Naive thymus-derived CD4-positive, alpha-beta T cell (primary cell): ENCODE measurements at regions of chr1 and their contacts with region 1.

Region 1: GRCh38 chr1:169928438-169929209 is 34.9 kb upstream of the SCYL3 start:
- DNase-seq: peak in 7 of 9 donors; percentile 12 to 61 (median 44)
- ATAC-seq: peak; percentile 78
- H3K4me3 ChIP-seq: no peak overlapping the region
- H3K4me3 Mint-ChIP-seq: no peak overlapping the region
- H3K27ac ChIP-seq: no peak overlapping the region
- H3K27ac Mint-ChIP-seq: peak overlapping the region in 1 of 9 donors; percentile 36
- H3K4me1 ChIP-seq: no peaks in the 10 kb centered on the region
- H3K4me1 Mint-ChIP-seq: peaks cover 3 to 6% (median 5%) of the 10 kb centered on the region in 7 donors
- H3K27me3 ChIP-seq: no peaks in the 10 kb centered on the region
- H3K27me3 Mint-ChIP-seq: no peaks in the 10 kb centered on the region

Region 2: GRCh38 chr1:169914531-169914930 is 14.1 kb before region 1 on chr1:
- CTCF ChIA-PET with region 1: no interaction called
- POLR2A ChIA-PET with region 1: no interaction called
- intact Hi-C with region 1: no loop called
- DNase-seq: no peak
- ATAC-seq: no peak
- H3K4me3 ChIP-seq: no peak overlapping the region
- H3K4me3 Mint-ChIP-seq: no peak overlapping the region
- H3K27ac ChIP-seq: no peak overlapping the region
- H3K27ac Mint-ChIP-seq: no peak overlapping the region
- H3K4me1 ChIP-seq: no peaks in the 10 kb centered on the region
- H3K4me1 Mint-ChIP-seq: peaks cover 0 to 4% (median 0%) of the 10 kb centered on the region in 7 donors
- H3K27me3 ChIP-seq: no peaks in the 10 kb centered on the region
- H3K27me3 Mint-ChIP-seq: no peaks in the 10 kb centered on the region

Region 3: GRCh38 chr1:169970114-169970513 is 41.5 kb after region 1 on chr1:
- CTCF ChIA-PET with region 1: no interaction called
- POLR2A ChIA-PET with region 1: no interaction called
- intact Hi-C with region 1: no loop called
- DNase-seq: no peak
- ATAC-seq: no peak
- H3K4me3 ChIP-seq: no peak overlapping the region
- H3K4me3 Mint-ChIP-seq: no peak overlapping the region
- H3K27ac ChIP-seq: no peak overlapping the region
- H3K27ac Mint-ChIP-seq: no peak overlapping the region
- H3K4me1 ChIP-seq: no peaks in the 10 kb centered on the region
- H3K4me1 Mint-ChIP-seq: peaks cover 0 to 3% (median 0%) of the 10 kb centered on the region in 7 donors
- H3K27me3 ChIP-seq: no peaks in the 10 kb centered on the region
- H3K27me3 Mint-ChIP-seq: no peaks in the 10 kb centered on the region

Region 4: DNA sequence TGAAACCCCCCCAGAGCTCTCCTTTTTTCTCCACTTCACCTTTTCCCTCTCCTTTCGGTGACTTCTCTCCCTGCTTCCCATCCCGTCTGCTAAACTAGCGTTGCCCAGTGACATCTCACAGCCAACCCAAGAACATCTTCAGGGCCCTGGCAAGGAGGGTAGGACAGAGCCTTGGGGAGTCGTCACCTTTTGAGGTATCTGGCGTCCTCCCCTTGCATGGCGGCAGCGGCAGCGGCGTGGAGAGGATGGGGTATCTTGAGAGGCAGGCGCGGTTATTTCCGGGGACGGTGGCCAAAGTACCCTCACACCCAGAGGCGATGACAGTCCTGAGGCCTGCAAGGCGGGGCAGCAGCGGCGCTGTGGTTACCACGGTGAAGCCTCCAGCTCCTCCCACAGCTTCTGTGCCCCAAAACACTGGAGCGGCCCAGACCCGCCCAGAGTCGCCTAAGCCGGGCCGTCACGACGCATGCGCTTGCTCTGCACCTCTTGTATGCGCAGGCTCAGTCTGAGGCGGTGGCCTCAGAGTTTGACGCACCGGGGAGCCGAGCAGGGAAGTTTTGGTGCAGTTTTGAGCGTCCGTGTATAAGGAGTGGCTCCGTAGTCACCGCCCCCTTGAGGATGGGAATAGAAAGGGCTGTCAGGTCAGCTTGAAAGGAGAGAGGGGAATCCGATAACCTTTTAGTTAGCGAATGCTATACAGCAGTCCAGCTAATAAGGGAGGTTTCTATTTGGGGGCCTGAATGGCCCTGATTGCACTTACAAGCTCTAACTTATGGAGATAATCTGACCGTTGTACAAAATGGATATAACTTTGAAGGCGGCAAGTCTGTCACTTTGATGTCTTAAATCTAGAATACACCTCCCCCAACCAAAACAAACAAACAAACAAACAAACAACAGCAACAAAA is 145.9 kb after region 1 on chr1 and contains the start of gene KIFAP3:
- CTCF ChIA-PET with region 1: no interaction called
- POLR2A ChIA-PET with region 1: no interaction called
- intact Hi-C with region 1: loop called in 1 of 2 experiments (anchors 1 kb)
- DNase-seq: peak; percentile 84 to 94 (median 92)
- ATAC-seq: peak; percentile 96
- H3K4me3 ChIP-seq: peak within 1 kb of the TSS; percentile 76
- H3K4me3 Mint-ChIP-seq: peak within 1 kb of the TSS; percentile 89 to 99 (median 96)
- H3K27ac ChIP-seq: peak within 1 kb of the TSS; percentile 90
- H3K27ac Mint-ChIP-seq: peak within 1 kb of the TSS; percentile 83 to 98 (median 94)
- H3K4me1 ChIP-seq: peaks cover 15 to 37% of the 10 kb centered on the region in 2 donors
- H3K4me1 Mint-ChIP-seq: peaks cover 34 to 65% (median 57%) of the 10 kb centered on the region in 7 donors
- H3K27me3 ChIP-seq: no peaks in the 10 kb centered on the region
- H3K27me3 Mint-ChIP-seq: peaks cover 0 to 3% (median 0%) of the 10 kb centered on the region in 5 donors
- total RNA-seq, gene KIFAP3: 12.8 to 23.8 (median 20.1) TPM

Region 5: DNA sequence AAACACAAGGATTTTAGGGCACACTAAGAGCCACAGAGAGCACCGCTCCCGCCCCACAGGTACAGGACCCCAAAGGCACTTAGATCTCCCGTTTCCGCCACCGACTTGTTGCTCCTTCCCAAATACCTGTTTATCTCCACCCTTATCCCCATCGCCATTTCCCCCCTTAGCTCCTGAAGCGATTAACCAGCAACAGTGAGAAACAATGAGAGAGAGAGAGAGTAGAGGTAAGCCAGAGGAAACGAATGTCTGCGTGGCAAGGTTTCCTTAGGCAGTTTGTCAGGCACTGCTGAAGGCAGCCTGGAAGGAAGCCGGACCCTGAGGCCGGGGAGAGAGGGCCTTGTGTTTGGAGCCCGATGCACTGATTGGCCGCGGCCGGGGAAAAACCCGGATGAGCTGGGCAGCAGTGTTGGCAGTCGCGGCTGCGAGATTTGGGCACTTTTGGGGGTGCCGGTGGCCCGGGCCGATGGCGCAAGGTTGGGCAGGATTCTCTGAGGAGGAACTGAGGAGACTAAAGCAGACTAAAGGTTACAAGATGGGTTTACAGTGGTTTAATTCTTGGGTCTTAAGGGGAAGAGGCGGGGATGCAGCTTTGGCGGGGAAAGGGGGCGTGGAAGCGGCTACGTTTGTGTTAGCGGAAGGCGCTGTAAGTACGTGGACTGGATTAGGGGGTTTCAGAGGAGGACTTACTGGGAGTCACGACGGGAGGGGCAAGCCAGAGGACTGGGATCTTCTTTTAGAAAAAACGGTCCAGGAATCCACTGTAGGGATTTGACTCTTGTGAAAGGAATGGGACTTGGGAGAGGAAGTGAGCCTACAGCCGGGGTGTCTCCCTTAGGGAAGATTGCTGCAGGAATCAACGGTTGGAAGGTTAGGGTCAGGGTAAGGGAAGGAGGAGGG is 603.4 kb after region 1 on chr1 and contains the start of gene GORAB:
- CTCF ChIA-PET with region 1: no interaction called
- POLR2A ChIA-PET with region 1: no interaction called
- intact Hi-C with region 1: loop called (anchors 2 kb)
- DNase-seq: peak; percentile 74 to 87 (median 83)
- ATAC-seq: peak; percentile 97
- H3K4me3 ChIP-seq: peak within 1 kb of the TSS; percentile 95
- H3K4me3 Mint-ChIP-seq: no peak within 1 kb of the TSS
- H3K27ac ChIP-seq: peak within 1 kb of the TSS; percentile 91
- H3K27ac Mint-ChIP-seq: peak within 1 kb of the TSS in 1 of 9 donors; percentile 36
- H3K4me1 ChIP-seq: peaks cover 8 to 14% of the 10 kb centered on the region in 2 donors
- H3K4me1 Mint-ChIP-seq: peaks cover 7 to 29% (median 19%) of the 10 kb centered on the region in 7 donors
- H3K27me3 ChIP-seq: no peaks in the 10 kb centered on the region
- H3K27me3 Mint-ChIP-seq: peaks cover 0 to 20% (median 0%) of the 10 kb centered on the region in 5 donors
- total RNA-seq, gene GORAB: 10.9 to 25.3 (median 22.7) TPM

Region 6: GRCh38 chr1:170664828-170665612 is 736.4 kb after region 1 on chr1:
- CTCF ChIA-PET with region 1: no interaction called
- POLR2A ChIA-PET with region 1: no interaction called
- intact Hi-C with region 1: loop called in 1 of 2 experiments (anchors 10 kb)
- DNase-seq: no peak
- ATAC-seq: no peak
- H3K4me3 ChIP-seq: no peak overlapping the region
- H3K4me3 Mint-ChIP-seq: peak overlapping the region in 9 of 10 donors; percentile 19 to 67 (median 42)
- H3K27ac ChIP-seq: no peak overlapping the region
- H3K27ac Mint-ChIP-seq: peak overlapping the region in 1 of 9 donors; percentile 23
- H3K4me1 ChIP-seq: no peaks in the 10 kb centered on the region
- H3K4me1 Mint-ChIP-seq: peaks cover 12 to 46% (median 32%) of the 10 kb centered on the region in 7 donors
- H3K27me3 ChIP-seq: peaks cover 5 to 9% of the 10 kb centered on the region in 2 donors
- H3K27me3 Mint-ChIP-seq: peaks cover 71 to 99% (median 82%) of the 10 kb centered on the region in 5 donors

Region 7: GRCh38 chr1:170929835-170930554 is 1001.4 kb after region 1 on chr1:
- CTCF ChIA-PET with region 1: interaction called, 7 read pairs
- POLR2A ChIA-PET with region 1: no interaction called
- intact Hi-C with region 1: loop called (anchors 1 kb)
- DNase-seq: peak in 7 of 9 donors; percentile 15 to 43 (median 28)
- ATAC-seq: peak; percentile 66
- H3K4me3 ChIP-seq: no peak overlapping the region
- H3K4me3 Mint-ChIP-seq: no peak overlapping the region
- H3K27ac ChIP-seq: no peak overlapping the region
- H3K27ac Mint-ChIP-seq: no peak overlapping the region
- H3K4me1 ChIP-seq: no peaks in the 10 kb centered on the region
- H3K4me1 Mint-ChIP-seq: no peaks in the 10 kb centered on the region
- H3K27me3 ChIP-seq: no peaks in the 10 kb centered on the region
- H3K27me3 Mint-ChIP-seq: peaks cover 3 to 9% (median 6%) of the 10 kb centered on the region in 5 donors

Region 8: GRCh38 chr1:171188388-171189266 is 1260.0 kb after region 1 on chr1:
- CTCF ChIA-PET with region 1: no interaction called
- POLR2A ChIA-PET with region 1: no interaction called
- intact Hi-C with region 1: loop called in 1 of 2 experiments (anchors 1 kb)
- DNase-seq: peak in 7 of 9 donors; percentile 7 to 25 (median 16)
- ATAC-seq: peak; percentile 70
- H3K4me3 ChIP-seq: no peak overlapping the region
- H3K4me3 Mint-ChIP-seq: no peak overlapping the region
- H3K27ac ChIP-seq: no peak overlapping the region
- H3K27ac Mint-ChIP-seq: no peak overlapping the region
- H3K4me1 ChIP-seq: no peaks in the 10 kb centered on the region
- H3K4me1 Mint-ChIP-seq: no peaks in the 10 kb centered on the region
- H3K27me3 ChIP-seq: no peaks in the 10 kb centered on the region
- H3K27me3 Mint-ChIP-seq: peaks cover 13 to 39% (median 19%) of the 10 kb centered on the region in 5 donors

Region 9: DNA sequence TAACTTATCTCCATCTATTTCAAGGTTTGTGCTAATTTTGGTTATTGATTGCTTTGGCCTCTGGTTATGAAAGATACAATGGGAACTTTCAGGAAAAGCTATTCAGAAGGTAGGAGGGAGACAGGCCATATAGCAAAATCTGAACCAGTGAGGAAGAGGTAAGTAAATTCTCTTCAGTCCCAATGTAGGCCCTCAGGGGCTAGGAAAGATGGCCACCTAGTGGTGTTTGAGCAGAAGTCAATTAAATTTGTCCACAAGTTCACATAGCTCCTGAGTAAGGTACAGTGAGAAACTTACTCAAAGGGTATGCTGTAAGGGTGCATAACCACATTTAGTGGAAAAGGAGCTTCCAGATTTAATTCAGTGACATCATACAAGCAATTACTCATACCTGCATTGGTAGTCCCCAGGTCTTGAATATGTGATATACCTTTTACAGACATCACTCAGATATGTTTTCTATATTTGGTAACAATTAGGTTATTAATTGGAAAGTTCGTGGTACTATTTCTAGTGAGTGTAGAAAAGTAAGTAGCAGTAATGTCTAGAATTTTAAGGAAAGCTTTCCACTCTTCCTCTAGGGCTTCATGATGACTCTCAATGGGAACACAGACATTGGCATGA is 1298.2 kb after region 1 on chr1:
- CTCF ChIA-PET with region 1: no interaction called
- POLR2A ChIA-PET with region 1: no interaction called
- intact Hi-C with region 1: loop called in 1 of 2 experiments (anchors 2 kb)
- DNase-seq: peak in 2 of 9 donors; percentile 2 to 3
- ATAC-seq: peak; percentile 69
- H3K4me3 ChIP-seq: no peak overlapping the region
- H3K4me3 Mint-ChIP-seq: no peak overlapping the region
- H3K27ac ChIP-seq: no peak overlapping the region
- H3K27ac Mint-ChIP-seq: no peak overlapping the region
- H3K4me1 ChIP-seq: no peaks in the 10 kb centered on the region
- H3K4me1 Mint-ChIP-seq: peaks cover 0 to 1% (median 0%) of the 10 kb centered on the region in 7 donors
- H3K27me3 ChIP-seq: peaks cover 0 to 3% of the 10 kb centered on the region in 2 donors
- H3K27me3 Mint-ChIP-seq: peaks cover 0 to 12% (median 4%) of the 10 kb centered on the region in 5 donors